Cardiac septum (tissue), 1 donor: ENCODE measurements at regions of chr4 and their contacts with region 1.

Region 1: GRCh38 chr4:141133146-141133998 is at the start of gene RNF150:
- DNase-seq: peak; percentile 86
- total RNA-seq, gene RNF150: 69.2 TPM

Region 2: GRCh38 chr4:140637836-140638235 is 495.5 kb before region 1 on chr4:
- intact Hi-C with region 1: loop called (anchors 10 kb)
- DNase-seq: no peak

Region 3: DNA sequence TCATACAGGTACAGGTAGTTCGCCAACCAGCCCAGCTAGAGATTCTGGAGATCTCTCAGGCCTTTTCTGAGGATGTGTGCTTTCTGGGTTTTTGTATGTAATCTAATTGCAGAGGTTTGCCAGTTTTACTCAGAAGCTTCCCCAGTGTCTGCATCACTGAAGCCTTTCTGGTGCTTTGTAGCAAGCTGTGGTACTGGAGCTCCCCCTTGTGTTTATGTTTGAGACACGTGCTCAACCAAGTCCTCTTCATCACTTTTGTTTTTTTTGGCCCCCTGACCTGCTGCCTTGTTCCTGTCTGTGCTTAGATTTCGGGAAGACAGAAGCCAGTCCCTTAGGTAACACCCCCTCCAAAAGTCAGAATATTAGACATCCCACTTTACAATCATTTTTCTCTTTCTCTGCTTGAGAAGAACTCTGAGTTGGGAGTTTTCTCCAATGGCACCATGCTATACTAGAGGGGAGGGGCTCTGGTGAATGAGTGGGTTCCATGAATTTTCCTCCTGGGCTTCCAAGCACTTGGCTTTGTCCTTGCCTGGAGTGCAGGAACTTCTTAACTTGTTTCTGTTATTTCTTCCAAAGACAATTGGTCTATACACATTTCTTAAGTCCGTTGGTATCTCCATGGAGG is 248.8 kb before region 1 on chr4:
- intact Hi-C with region 1: loop called (anchors 5 kb)
- DNase-seq: no peak

Region 4: GRCh38 chr4:140943486-140944198 is 189.7 kb before region 1 on chr4:
- intact Hi-C with region 1: loop called (anchors 5 kb)
- DNase-seq: no peak

Region 5: DNA sequence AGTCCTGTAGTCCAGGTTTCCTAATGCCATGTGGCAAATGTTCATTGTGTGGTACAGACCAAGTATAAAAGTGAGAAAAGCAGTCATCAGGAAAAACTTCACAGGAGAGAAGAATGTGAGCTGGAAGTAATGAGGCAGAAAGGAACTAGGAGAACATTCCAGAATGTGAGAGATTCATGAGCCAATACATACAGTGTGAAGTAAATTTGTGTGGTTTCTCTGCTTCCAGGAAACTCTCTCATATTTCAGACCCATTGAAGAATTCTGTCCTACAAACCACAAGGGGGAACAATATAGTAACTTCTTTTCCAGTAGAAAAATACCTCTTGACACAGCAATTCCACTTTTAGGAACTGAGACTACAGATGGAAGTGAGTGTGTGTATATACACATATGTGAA is 136.6 kb before region 1 on chr4:
- intact Hi-C with region 1: loop called (anchors 5 kb)
- DNase-seq: no peak

Region 6: DNA sequence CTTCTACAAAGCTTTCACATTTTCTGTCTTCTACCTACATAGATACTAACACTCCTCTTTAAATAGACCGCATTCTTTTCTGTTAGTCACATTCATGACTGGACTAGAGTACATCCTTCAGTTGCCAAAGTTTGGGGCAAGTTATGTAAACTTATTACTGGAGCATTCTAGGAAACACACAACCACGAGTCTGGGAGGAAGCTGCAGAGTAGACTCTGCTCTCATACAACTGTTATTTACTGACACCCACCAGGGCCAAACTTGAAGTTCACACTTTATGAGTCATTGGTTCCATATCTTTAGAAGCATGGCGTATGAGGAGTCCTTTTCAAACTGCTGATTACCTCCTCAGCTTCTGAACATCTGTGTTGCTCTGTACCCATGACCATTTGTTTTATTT is 87.1 kb before region 1 on chr4:
- intact Hi-C with region 1: loop called (anchors 2 kb)
- DNase-seq: no peak